Left ventricle myocardium inferior (tissue), 1 donor: ENCODE measurements at regions of chr4 and their contacts with region 1.

Region 1: DNA sequence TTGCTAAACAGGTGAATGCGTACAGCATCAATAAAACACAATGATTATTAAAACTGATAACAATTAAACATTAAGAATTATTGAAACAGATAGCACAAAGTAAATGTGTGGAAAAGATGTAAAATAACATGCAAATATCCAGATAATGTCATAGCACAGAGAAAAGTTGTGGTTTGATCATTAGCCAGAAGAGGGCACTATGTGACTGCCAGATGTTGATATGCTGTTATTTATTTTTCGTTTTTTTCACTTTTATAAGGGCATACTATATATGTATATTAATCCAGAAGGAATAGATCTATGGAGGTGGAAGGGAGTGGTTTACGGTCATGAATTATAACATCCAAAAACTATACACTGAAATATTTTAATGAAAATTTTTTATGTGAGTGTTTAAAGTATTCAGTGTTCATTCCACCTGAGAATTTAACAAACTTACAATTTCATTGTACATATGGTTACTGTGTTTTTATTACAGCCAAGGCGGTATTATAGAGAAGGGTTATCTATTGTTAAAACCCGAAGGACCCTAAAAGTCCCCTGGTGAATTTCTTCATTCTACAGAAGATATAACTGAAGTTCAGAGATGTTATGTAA is 211.9 kb upstream of the UGT8 start:
- DNase-seq: no peak
- H3K4me3 ChIP-seq: no peak overlapping the region
- H3K27ac ChIP-seq: no peak overlapping the region
- H3K4me1 ChIP-seq: no peaks in the 10 kb centered on the region
- H3K27me3 ChIP-seq: peaks cover 4% of the 10 kb centered on the region
- CTCF ChIP-seq: peak; percentile 70

Region 2: GRCh38 chr4:114659386-114660008 is 272.8 kb after region 1 on chr4:
- intact Hi-C with region 1: loop called (anchors 10 kb)
- DNase-seq: peak; percentile 12
- H3K4me3 ChIP-seq: no peak overlapping the region
- H3K27ac ChIP-seq: no peak overlapping the region
- H3K4me1 ChIP-seq: no peaks in the 10 kb centered on the region
- H3K27me3 ChIP-seq: no peaks in the 10 kb centered on the region
- CTCF ChIP-seq: peak; percentile 80

Region 3: DNA sequence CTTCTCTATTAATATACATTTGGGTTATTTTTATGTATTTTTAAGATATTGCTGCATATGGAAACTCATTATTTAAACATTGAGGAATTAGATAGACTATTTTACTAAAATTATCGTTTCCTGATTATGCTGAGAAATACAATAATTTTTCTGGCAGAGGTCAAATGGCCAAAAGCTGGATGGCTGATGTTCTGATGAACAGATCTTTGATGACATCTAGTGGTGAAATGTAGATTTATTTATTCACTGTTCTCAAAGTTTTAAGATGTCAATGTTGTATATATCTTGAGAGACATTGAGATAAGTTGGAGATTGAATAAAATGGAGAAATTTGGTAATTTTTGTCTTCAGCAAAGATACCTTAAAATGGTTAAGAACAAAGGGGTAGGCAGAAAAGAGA is 308.0 kb after region 1 on chr4:
- intact Hi-C with region 1: loop called (anchors 10 kb)
- DNase-seq: no peak
- H3K4me3 ChIP-seq: no peak overlapping the region
- H3K27ac ChIP-seq: no peak overlapping the region
- H3K4me1 ChIP-seq: no peaks in the 10 kb centered on the region
- H3K27me3 ChIP-seq: no peaks in the 10 kb centered on the region
- CTCF ChIP-seq: peak; percentile 67